Panc1 (cell line): ENCODE measurements at regions of chr1 and their contacts with region 1.

Region 1: DNA sequence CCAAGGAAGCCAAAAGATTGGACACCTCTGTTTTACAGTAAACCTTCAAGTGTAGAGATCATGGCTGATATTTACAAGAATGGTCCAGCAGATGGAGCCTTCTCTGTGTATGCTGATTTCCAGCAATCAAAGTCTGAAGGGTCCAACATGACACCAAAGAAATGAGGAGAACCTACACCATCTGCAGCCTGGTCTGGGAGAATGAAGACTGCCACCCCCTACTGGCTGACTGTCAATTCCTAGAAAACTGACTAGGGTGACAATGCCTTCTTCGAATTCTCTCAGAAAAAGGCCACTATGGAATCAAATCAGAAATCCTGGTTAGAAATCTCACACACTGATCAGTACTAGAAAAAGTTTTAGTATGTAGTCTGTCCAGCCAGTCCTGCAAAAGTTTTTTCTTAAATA is 83.3 kb downstream of the CDC42BPA start:
- DNase-seq: peak; percentile 12
- ATAC-seq: peak; percentile 84
- H3K4me3 ChIP-seq: no peak overlapping the region
- H3K27ac ChIP-seq: no peak overlapping the region
- H3K4me1 ChIP-seq: no peaks in the 10 kb centered on the region
- H3K27me3 ChIP-seq: no peaks in the 10 kb centered on the region
- CTCF ChIP-seq: peak; percentile 76

Region 2: DNA sequence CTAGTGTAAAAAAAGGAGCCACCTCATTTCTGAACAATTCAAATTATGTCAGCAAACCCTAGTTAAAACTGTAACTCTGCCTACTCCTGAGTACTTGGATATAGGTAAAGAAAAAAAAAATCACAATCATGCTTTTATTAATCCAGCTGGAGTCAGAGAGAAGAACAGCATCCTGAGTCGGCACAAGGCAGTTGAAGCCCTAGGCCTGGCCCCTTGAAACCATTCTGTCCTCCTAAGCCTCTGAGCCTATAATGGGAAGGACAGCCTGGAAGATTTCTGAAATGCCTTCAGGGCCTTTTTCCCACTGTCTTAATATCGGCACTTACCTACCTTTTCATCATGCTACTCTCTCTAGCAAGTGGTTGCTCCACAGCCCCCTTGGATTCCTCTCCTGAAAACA is 50.7 kb after region 1 on chr1:
- CTCF ChIA-PET with region 1: no interaction called
- POLR2A ChIA-PET with region 1: no interaction called
- in situ Hi-C with region 1: no loop called
- intact Hi-C with region 1: no loop called
- DNase-seq: no peak
- ATAC-seq: no peak
- H3K4me3 ChIP-seq: no peak overlapping the region
- H3K27ac ChIP-seq: no peak overlapping the region
- H3K4me1 ChIP-seq: no peaks in the 10 kb centered on the region
- H3K27me3 ChIP-seq: no peaks in the 10 kb centered on the region
- CTCF ChIP-seq: no peak

Region 3: GRCh38 chr1:227318003-227318852 is 83.2 kb after region 1 on chr1 and contains the start of gene CDC42BPA:
- CTCF ChIA-PET with region 1: no interaction called
- POLR2A ChIA-PET with region 1: no interaction called
- in situ Hi-C with region 1: no loop called
- intact Hi-C with region 1: loop called (anchors 5 kb)
- DNase-seq: no peak
- ATAC-seq: peak; percentile 93
- H3K4me3 ChIP-seq: peak within 1 kb of the TSS; percentile 92 to 97
- H3K27ac ChIP-seq: peak within 1 kb of the TSS; percentile 90
- H3K4me1 ChIP-seq: peaks cover 12% of the 10 kb centered on the region
- H3K27me3 ChIP-seq: no peaks in the 10 kb centered on the region
- CTCF ChIP-seq: no peak
- total RNA-seq, gene CDC42BPA: 32.8 TPM